Mammary epithelial cell (primary cell): ENCODE measurements at regions of chr1 and their contacts with region 1.

Region 1: GRCh38 chr1:91864017-91864700 is 21.8 kb downstream of the TGFBR3 start:
- DNase-seq: peak; percentile 88
- H3K4me3 ChIP-seq: peak overlapping the region in 1 of 3 experiments; percentile 21
- H3K27ac ChIP-seq: peak overlapping the region; percentile 40
- H3K4me1 ChIP-seq: peaks cover 17% of the 10 kb centered on the region
- H3K27me3 ChIP-seq: peaks cover 13% of the 10 kb centered on the region
- CTCF ChIP-seq: no peak

Region 2: DNA sequence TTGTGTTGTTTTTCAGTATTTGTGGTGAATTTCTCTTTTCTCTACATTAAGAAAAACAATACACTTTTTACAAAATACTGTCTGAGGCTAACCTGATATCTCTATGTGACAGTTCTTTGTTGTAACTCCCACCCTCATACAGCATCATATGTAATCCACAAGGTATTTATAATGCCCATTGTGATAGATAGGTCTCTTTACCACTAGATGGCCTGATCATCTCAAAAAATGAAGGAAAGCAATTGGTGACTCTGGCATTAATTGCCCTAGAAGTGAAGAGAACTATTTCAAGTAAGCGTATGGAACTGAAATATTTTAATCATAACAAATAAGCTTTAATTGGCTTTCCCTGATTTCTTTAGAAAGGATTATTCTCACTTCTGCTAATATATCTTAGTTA is 423.3 kb before region 1 on chr1:
- CTCF ChIA-PET with region 1: no interaction called
- dilution Hi-C with region 1: no loop called
- in situ Hi-C with region 1: no loop called
- intact Hi-C with region 1: no loop called
- DNase-seq: no peak
- H3K4me3 ChIP-seq: no peak overlapping the region
- H3K27ac ChIP-seq: no peak overlapping the region
- H3K4me1 ChIP-seq: no peaks in the 10 kb centered on the region
- H3K27me3 ChIP-seq: peaks cover 2% of the 10 kb centered on the region
- CTCF ChIP-seq: peak; percentile 27 to 35

Region 3: GRCh38 chr1:91846007-91846617 is 18.0 kb before region 1 on chr1:
- CTCF ChIA-PET with region 1: interaction called, 15 read pairs
- dilution Hi-C with region 1: no loop called
- in situ Hi-C with region 1: no loop called
- intact Hi-C with region 1: no loop called
- DNase-seq: no peak
- H3K4me3 ChIP-seq: no peak overlapping the region
- H3K27ac ChIP-seq: no peak overlapping the region
- H3K4me1 ChIP-seq: peaks cover 19% of the 10 kb centered on the region
- H3K27me3 ChIP-seq: no peaks in the 10 kb centered on the region
- CTCF ChIP-seq: no peak

Region 4: GRCh38 chr1:91916811-91917460 is 52.8 kb after region 1 on chr1:
- CTCF ChIA-PET with region 1: no interaction called
- dilution Hi-C with region 1: no loop called
- in situ Hi-C with region 1: no loop called
- intact Hi-C with region 1: no loop called
- DNase-seq: no peak
- H3K4me3 ChIP-seq: no peak overlapping the region
- H3K27ac ChIP-seq: no peak overlapping the region
- H3K4me1 ChIP-seq: no peaks in the 10 kb centered on the region
- H3K27me3 ChIP-seq: no peaks in the 10 kb centered on the region
- CTCF ChIP-seq: no peak